Posterior cingulate gyrus (tissue), 11 donors: ENCODE measurements at regions of chr11 and their contacts with region 1.

Region 1: DNA sequence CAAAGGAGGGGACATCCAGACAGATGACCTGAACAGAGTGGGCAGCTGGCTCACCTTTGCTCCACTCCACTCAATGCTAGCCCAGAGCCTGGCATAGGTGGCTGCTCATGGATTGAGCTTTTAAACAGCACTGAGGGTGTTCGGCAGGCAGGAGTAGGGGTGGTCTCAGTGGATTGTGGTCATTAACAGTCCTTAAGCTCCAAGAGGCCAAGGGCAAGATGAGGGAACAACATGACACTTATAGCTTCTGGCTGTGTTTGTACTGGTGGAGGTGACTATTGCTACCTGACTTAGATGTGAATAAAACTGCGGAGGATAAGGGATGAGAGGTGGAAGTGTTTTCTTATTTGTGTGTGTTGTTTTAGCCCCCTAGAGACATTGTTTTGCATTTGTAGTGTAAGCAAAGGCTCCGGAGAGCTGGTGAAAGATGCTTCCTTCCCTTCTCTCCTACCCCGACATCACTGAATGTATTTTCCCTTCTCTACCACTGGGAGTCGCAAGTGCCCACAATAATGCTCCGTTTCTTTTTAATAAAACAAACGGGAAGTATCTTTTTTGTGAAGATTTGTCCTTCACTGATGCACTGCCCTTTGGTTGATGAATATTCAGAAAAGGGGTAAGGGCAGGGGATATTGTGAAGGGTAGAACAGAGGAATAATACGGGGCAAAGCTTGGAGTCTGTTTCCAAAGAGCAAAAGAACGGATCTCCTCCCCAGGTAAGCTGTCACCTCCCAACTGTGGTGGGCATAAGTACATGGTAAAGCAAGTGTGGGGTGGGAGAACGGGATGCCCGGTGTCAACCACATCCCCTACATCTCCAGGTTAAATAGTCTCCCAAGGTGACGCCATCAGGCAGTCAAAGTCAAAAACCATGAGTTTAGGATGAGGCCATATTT is 27.5 kb upstream of the MTNR1B start:
- DNase-seq: peak in 1 of 10 donors; percentile 4

Region 2: GRCh38 chr11:93169950-93170561 is 228.1 kb after region 1 on chr11:
- intact Hi-C with region 1: loop called (anchors 5 kb)
- DNase-seq: no peak

Region 3: DNA sequence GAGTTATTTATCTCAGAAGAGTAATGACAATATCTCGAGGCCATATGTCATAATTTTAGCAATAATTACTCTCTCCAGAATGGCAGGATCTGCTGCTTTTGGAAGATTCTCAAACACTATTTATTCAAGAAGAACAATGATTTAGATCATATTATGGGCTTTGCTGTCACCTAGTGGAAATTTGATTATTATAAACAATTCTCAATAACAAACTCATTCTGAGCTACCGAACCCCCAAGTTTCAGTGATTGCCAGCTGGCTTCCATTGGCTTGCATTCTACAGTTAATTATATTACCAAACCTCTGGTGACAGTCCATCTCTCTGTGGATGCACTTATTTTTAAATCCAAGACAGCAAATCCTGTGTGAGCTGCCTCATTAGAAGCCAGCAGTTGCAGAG is 283.7 kb after region 1 on chr11:
- intact Hi-C with region 1: loop called (anchors 5 kb)
- DNase-seq: no peak